ENCODE measurements at regions of chr6 and their contacts with region 1.

Region 1: GRCh38 chr6:138115877-138116660 is 8.8 kb upstream of the PERP start:
- DNase-seq: peak; percentile 62
- ATAC-seq: peak; percentile 90

Region 2: DNA sequence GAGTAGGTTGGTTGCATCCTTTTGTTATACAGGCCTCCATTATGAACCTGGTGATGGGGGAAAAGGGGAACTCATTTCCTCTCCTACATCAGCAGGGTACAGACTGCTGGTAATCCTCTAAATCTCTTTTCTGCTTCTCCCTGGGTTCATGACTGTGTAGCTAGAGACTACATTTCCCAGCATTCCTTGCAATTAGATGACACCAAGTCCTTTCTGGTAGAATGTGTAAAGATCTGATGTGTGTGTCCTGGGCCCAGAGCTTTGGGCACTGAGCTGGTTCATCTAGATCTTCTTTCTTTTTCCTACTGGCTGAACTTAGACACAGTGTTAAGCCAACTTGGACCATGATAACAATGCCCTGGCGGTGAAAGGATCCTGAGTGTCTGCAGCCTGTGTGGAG is 792.2 kb before region 1 on chr6:
- intact Hi-C with region 1: no loop called
- DNase-seq: no peak
- ATAC-seq: no peak

Region 3: DNA sequence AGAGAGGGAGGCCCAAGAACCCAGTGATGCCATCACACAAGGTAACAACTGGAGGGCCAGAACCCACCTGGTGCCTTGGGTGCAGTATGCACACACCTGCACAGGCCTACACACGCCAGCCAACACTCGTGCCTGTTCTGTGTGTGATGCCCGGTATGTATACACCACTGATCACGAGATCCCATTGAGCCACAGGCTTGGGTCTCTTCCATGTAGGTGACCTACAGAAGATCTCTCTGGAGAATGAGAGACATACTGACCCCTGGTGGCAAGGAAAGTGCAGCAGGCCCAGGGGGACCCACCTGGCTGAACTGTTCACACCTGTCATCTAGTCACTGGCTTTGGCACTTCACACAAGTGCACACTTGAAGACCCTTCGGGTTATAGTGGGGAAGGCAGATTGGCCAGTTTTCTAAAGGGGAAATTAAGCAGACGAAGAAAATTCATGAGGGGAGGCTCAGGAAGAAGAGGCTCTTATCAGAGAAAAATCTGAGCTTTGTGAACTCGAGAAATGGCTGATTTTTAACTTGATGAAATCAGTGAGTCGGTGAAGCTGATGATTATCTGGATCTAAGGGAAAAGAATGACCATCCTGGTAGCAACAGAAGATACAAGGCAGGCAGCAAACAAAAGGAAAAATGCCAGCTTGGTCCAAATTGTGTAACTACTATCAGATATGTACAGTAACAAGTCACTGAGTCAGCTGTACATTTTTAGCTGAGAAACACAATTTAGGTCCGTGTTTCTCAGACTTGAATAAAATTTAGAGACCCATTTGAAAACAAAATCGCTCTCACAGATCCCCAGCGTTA is 171.3 kb after region 1 on chr6:
- intact Hi-C with region 1: loop called (anchors 5 kb)
- DNase-seq: no peak
- ATAC-seq: peak; percentile 55

Region 4: GRCh38 chr6:138403801-138404661 is 288.0 kb after region 1 on chr6 and contains the start of gene HEBP2:
- intact Hi-C with region 1: loop called (anchors 10 kb)
- DNase-seq: peak; percentile 96
- ATAC-seq: peak; percentile 96
- total RNA-seq, gene HEBP2: 87.4 TPM

Region 5: DNA sequence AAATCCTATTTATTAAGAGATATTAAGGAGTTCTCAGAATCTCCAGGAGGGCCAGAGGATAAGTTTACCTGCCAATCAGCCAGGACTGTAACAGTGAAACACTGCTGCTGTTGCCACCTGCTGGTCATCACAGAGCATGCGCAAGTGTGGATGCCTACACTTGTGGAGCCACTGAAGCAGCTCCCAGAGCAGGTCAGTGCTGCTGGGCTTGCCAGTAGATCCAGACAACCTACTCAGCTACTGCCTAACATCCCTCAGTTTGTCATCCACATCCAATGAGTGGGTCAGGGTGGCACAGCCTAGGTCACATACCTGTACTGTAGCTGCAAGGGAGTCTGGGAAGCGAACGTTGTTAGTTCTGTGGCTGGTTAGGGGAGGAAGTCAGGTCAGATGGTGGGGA is 401.6 kb after region 1 on chr6:
- intact Hi-C with region 1: loop called (anchors 10 kb)
- DNase-seq: no peak
- ATAC-seq: no peak

Region 6: GRCh38 chr6:138588805-138589434 is 472.9 kb after region 1 on chr6:
- intact Hi-C with region 1: loop called (anchors 5 kb)
- DNase-seq: peak; percentile 59
- ATAC-seq: peak; percentile 73

Region 7: DNA sequence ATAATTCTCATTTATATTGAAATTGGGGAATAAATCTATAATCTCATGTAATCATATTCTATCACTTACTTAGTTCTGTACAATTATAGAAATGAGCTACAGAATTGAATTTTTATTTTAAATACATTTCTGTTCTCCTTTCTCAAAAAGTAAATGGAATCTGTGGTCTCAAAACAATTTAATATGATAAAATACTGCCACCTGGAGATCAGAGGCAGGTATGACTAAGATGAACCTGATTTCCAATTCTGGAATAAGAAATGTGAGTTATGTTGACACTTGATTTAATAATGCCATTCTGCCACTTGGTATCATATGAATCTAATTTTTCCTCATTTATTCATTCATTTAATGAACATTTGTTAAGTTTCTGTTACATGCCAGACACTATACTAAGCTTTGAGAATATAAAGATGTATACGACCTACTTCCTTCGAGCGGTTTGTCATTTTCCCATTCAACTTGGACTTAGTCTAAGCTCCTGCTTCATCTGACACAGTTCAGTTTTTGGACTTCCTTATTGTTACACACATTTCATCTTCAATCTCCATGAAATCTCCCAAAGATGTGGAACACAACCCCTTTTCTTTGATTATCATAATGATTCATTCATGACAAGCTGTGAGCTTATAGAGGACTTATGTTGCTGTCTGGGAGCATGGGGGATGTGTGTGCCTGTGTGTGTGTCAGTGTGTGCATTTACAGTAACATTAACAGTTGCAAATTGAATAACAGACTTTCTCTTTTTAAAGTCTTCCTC is 650.0 kb after region 1 on chr6:
- intact Hi-C with region 1: loop called (anchors 5 kb)
- DNase-seq: no peak
- ATAC-seq: peak; percentile 48

Measured in Right ventricle myocardium superior (tissue), 1 donor.